ENCODE measurements at regions of chr3 and their contacts with region 1.

Region 1: DNA sequence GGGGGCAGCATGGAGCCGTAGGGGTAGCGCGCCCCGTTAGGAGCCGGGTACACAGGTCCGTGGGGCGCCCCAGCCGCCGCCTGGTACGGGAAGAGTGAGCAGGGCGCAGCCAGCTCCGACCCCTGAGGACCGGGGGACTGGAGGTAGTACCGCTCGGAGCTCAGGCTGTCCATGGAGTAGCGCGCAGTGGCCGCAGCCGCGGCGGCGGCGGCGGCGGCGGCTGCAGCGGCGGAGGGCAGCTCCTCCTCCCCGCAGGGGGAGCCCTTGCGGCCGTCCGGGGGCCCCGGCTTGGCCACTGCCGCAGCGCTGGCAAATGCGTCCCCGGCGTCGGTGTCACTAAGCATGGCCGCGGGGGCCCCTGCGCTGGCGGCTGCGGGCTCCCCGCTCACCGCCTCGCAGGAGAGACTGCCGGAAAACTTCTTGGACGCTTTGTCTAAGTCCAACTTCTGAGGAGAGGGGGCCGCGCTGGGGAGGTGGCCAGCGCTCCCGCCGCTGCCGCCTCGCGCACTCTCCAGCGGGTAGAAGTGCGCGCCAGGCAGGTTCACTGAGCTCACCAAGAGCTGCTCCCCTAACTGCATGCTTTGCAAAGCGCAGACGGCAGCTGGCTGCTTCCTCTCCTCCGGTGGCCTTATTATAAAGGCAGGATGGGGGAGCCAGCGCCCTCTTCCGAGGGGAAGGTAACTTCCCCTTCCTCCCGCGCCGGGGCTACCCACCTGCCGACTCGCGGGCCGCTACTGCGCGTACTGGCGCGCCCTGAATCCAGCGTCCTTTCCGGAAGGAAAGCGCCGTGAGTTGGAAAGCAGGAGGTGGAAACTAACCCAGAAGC is at the start of gene EOMES:
- DNase-seq: peak; percentile 67
- H3K4me3 Mint-ChIP-seq: peak within 1 kb of the TSS; percentile 87
- H3K27ac Mint-ChIP-seq: peak within 1 kb of the TSS; percentile 81
- H3K4me1 Mint-ChIP-seq: peaks cover 44% of the 10 kb centered on the region
- H3K27me3 Mint-ChIP-seq: peaks cover 79% of the 10 kb centered on the region
- total RNA-seq, gene EOMES: 29.6 and 30.7 TPM in 2 replicates

Region 2: GRCh38 chr3:27431116-27431515 is 290.8 kb before region 1 on chr3:
- intact Hi-C with region 1: no loop called
- DNase-seq: no peak
- H3K4me3 Mint-ChIP-seq: no peak overlapping the region
- H3K27ac Mint-ChIP-seq: no peak overlapping the region
- H3K4me1 Mint-ChIP-seq: no peaks in the 10 kb centered on the region
- H3K27me3 Mint-ChIP-seq: no peaks in the 10 kb centered on the region

Region 3: DNA sequence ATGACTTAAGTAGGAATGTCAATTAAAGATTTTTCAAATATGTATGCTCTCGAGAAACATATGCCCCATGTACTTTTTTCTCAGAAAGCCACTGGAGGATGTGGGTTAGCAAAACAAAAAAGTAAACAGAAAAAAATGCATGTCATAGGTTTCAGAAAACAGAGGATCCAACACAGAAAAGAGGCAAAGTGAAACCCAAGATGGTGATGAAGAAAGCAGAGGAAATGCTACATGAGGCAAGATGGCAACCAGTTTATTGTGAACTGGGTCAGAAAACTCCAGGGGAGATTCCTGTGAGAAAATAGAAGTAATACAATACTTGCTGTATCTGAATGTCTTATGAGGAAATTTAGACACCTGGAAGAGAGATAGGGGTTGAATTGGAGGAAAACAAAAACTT is 31.0 kb after region 1 on chr3:
- intact Hi-C with region 1: loop called (anchors 2 kb)
- DNase-seq: peak; percentile 17
- H3K4me3 Mint-ChIP-seq: peak overlapping the region; percentile 42
- H3K27ac Mint-ChIP-seq: peak overlapping the region; percentile 96
- H3K4me1 Mint-ChIP-seq: peaks cover 35% of the 10 kb centered on the region
- H3K27me3 Mint-ChIP-seq: no peaks in the 10 kb centered on the region

Region 4: DNA sequence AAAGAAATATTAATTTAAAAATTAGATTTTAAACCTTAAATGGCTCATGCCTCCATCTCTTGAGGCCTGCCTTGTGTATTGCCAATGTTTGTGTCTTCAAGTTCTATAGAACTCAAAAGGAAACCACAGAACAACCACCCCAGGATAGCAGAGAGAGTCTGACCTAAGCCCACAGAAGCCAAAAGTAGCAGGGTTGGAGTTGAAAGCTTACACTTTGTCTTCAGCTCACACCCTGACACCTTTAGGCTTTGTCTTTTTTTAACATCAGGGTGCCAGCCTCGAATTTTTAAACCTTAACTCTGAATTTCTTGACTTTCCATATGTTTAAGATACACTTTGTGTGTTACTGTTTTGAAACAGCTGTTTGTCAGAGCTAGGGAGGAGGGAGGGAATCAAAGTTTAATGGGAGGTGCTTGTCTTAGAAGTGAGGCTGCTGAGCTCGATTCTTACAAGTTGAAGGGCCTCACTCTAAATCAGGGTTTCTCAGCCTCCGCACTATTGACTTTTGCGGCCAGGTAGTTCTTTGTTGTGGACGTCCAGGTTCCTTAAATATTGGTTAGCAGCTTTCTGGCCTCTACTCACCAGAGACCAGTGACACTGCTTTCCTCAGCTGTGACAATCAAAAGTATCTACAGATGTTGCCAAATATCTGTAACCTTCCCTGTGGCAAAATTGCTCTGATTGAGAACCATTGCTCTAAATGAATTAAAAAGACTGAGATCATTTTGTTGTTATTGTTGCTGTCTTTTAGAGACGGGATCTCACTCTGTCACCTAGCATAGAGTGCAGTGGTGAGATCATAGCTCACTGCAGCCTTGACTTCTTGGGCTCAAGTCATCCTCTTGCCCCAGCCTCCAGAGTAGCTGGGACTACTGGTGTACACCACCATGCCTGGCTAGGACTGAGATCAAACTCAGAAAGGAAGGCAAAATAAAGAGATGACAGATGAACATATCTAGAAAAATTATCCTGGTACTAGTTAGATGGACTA is 139.4 kb after region 1 on chr3:
- intact Hi-C with region 1: loop called (anchors 1 kb)
- DNase-seq: peak; percentile 42
- H3K4me3 Mint-ChIP-seq: peak overlapping the region; percentile 47
- H3K27ac Mint-ChIP-seq: peak overlapping the region; percentile 87
- H3K4me1 Mint-ChIP-seq: peaks cover 38% of the 10 kb centered on the region
- H3K27me3 Mint-ChIP-seq: no peaks in the 10 kb centered on the region

Region 5: GRCh38 chr3:28286595-28286994 is 564.7 kb after region 1 on chr3:
- intact Hi-C with region 1: loop called (anchors 1 kb)
- DNase-seq: no peak
- H3K4me3 Mint-ChIP-seq: no peak overlapping the region
- H3K27ac Mint-ChIP-seq: no peak overlapping the region
- H3K4me1 Mint-ChIP-seq: peaks cover 23% of the 10 kb centered on the region
- H3K27me3 Mint-ChIP-seq: no peaks in the 10 kb centered on the region

Measured in activated T-helper 1 cell treated with anti-CD3 and anti-CD28 coated beads, Interleukin-12 subunit alpha, Interleukin-12 subunit beta, Interleukin-2, Interleukin-4 antibody, amounts not matched to agents 30 ng/mL and 10 ng/mL and 1 ng/mL, durations not matched to agents 14 hours and 24 hours and 36 hours (primary cell).